ENCODE measurements at regions of chr12 and their contacts with region 1.

Region 1: DNA sequence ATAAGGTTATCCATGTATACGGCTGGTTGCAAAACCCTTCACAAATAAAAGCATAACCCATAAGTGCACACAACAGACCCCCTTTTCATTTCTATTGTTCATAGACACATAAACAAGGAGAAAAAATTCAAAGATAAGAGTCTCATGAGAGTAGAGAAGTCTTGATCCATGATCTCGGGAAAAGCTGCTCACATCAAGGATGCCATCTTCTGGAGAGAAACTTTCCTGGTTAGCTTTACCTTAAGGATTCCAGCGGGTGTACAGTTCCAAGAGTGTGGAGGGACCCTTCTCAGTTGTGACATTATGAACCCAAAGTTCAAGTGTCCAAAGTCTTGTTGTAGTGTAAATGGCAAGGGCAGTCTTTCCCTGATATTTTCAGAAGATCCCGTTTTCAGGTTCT is 144.5 kb downstream of the LLPH start:
- DNase-seq: no peak
- H3K4me3 ChIP-seq: no peak overlapping the region
- H3K27ac ChIP-seq: no peak overlapping the region
- H3K4me1 ChIP-seq: no peaks in the 10 kb centered on the region
- H3K27me3 ChIP-seq: no peaks in the 10 kb centered on the region
- CTCF ChIP-seq: no peak
- POLR2A ChIP-seq: no peak

Region 2: DNA sequence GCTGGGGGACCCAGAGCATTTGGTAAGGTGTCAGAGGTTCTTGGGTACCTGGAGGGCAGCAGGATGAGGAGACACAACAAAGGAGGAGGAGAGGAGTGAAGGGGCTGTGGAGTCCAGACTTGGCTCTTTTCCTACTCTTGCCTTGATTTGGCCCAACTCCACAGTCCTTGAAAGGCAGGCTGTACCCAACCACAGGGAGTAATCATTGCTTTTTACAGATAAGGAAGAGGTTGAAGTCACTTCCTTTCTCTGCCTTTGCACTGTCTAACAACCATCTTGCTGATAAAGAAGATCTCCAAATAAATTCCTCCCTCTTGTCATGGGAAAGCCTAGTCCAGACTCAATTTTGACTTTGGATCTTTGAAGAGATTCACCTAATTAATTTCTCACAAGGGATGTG is 388.5 kb before region 1 on chr12:
- intact Hi-C with region 1: loop called (anchors 10 kb)
- DNase-seq: no peak
- H3K4me3 ChIP-seq: no peak overlapping the region
- H3K27ac ChIP-seq: no peak overlapping the region
- H3K4me1 ChIP-seq: peaks cover 16% of the 10 kb centered on the region
- H3K27me3 ChIP-seq: no peaks in the 10 kb centered on the region
- CTCF ChIP-seq: no peak
- POLR2A ChIP-seq: no peak